AG04450 (cell line): ENCODE measurements at regions of chr3 and their contacts with region 1.

Region 1: DNA sequence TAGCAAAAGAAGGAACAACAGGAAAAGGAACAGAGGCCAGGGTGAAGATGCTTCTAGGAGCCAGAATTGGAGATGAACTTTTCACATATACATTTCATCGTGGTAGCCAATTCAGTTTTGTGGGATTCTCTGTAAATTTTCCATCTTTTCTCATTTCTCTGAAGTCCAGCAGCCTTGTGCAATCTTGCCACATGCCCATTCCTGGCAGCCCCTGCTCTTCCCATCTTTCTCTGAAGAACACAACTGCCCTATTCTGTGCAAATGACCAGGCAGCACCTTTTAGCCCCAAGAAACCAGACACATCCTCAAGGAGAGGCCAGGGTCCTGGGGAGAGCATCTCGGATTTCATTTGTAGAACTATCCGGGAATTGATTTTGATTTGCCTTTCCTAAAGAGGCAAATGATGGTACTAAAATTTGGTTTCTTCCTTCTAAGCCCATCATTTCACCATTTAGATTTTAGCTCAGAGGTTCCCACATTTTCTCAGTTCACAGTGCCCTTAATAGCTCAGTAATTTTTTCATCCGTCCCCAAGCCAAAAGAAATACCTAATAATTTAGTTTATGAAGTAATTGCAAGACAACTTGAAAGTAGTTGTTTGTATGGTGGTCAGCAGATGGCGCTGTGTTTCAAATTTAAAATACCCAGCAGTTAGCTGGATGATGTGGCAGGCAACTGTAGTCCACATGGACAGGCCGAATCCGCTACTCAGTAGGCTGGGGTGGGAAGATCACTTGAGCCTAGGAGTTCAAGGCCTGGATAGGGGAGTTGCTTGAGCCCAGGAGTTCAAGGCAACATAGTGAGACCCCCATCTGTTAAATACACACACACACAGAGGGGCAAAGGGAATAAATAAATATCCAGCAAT is 61.3 kb upstream of the ACKR4 start:
- DNase-seq: peak; percentile 78
- H3K4me3 ChIP-seq: no peak overlapping the region
- H3K27ac ChIP-seq: no peak overlapping the region
- H3K27me3 ChIP-seq: no peaks in the 10 kb centered on the region
- CTCF ChIP-seq: peak; percentile 62

Region 2: GRCh38 chr3:131596884-131597283 is 938.9 kb before region 1 on chr3:
- CTCF ChIA-PET with region 1: no interaction called
- POLR2A ChIA-PET with region 1: no interaction called
- DNase-seq: no peak
- H3K4me3 ChIP-seq: no peak overlapping the region
- H3K27ac ChIP-seq: no peak overlapping the region
- H3K27me3 ChIP-seq: no peaks in the 10 kb centered on the region
- CTCF ChIP-seq: no peak

Region 3: GRCh38 chr3:132499071-132499470 is 36.7 kb before region 1 on chr3:
- CTCF ChIA-PET with region 1: interaction called, 11 read pairs
- POLR2A ChIA-PET with region 1: no interaction called
- DNase-seq: no peak
- H3K4me3 ChIP-seq: no peak overlapping the region
- H3K27ac ChIP-seq: no peak overlapping the region
- H3K27me3 ChIP-seq: no peaks in the 10 kb centered on the region
- CTCF ChIP-seq: no peak

Region 4: GRCh38 chr3:132522353-132522752 is 13.5 kb before region 1 on chr3:
- CTCF ChIA-PET with region 1: interaction called, 33 read pairs
- POLR2A ChIA-PET with region 1: no interaction called
- DNase-seq: no peak
- H3K4me3 ChIP-seq: no peak overlapping the region
- H3K27ac ChIP-seq: no peak overlapping the region
- H3K27me3 ChIP-seq: no peaks in the 10 kb centered on the region
- CTCF ChIP-seq: no peak

Region 5: GRCh38 chr3:132595014-132595413 is 59.2 kb after region 1 on chr3:
- CTCF ChIA-PET with region 1: interaction called, 15 read pairs
- POLR2A ChIA-PET with region 1: no interaction called
- DNase-seq: no peak
- H3K4me3 ChIP-seq: no peak overlapping the region
- H3K27ac ChIP-seq: no peak overlapping the region
- H3K27me3 ChIP-seq: no peaks in the 10 kb centered on the region
- CTCF ChIP-seq: no peak

Region 6: DNA sequence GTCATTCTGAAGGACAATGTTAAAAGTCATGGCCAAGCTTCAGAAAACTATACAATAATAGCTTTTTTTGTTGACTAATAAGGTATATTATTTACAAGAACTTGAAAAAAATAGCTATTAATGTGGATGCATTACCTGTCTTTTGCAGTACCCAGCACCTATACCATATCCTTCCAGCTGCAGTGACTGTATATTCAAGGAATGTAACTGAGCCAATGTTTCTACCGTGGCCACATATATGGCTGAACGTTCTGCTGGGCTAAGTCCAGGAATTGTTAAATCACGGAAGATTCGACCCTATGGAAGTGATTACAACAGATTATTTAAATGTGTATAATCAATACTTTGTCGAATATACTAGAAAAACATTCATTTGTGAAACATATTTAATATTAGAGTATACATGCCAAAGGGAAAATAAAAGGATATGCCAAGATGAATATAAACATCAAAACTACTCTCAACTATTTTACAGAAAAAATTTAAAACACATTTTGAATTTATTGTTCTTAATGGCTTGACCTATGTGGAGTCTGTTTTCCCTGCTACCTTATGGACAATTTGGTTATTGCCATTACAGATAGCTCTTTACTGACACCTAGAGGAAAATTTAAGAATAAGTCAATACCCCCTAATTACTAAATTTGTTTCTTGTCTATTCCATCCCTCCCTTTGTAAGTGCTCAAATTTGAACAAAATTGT is 106.2 kb after region 1 on chr3:
- CTCF ChIA-PET with region 1: interaction called, 381 read pairs
- POLR2A ChIA-PET with region 1: interaction called, 5 read pairs
- DNase-seq: no peak
- H3K4me3 ChIP-seq: no peak overlapping the region
- H3K27ac ChIP-seq: no peak overlapping the region
- H3K27me3 ChIP-seq: no peaks in the 10 kb centered on the region
- CTCF ChIP-seq: peak; percentile 74